HEK293T (cell line): ENCODE measurements at regions of chr4 and their contacts with region 1.

Region 1: DNA sequence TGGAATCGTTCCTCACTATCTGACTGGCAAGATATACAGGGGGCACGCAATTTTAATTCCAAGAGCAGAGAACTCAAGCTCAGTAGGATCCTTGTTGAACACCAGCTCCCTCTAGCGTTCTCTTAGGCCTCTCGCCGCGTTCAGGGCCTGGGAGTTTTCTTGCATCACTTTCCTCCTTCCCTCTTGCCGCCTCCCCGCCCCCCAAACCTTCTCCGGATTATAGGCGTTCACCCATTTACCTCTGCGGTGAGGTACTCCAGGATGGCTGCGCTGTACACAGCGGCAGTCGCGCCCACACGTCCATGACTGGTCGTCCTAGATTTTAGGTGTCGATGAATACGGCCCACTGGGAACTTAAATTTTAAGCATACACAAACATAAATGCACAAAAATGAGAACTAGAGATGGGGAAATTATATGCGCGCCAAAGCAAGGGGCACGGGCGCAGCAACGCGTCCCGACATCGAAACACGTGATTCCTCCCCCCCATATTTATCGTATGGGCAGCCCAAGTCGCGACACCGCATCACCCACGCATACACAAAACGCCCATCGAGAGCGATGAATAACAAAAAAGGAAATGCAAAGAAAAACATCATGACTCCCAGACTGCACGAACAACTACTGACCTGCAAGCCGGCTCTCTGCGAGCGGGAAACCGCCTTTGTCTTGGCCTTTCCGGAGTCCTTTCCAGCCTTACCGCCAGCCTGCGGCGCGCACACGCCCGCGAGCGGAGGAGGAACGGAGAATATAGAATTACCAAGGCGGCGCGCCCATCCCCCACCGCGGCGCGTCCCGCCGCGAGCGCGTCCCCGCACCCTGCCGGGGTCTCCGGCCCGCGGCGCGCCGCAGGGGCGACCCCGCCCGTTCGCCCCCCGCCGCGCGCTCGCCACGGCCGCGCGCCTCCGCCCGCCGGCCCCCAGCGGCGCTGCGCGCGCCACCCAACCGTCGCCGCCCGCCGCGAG is 759 bp downstream of the H2AZ1 start:
- DNase-seq: peak; percentile 50

Region 2: GRCh38 chr4:99563310-99564186 is 385.8 kb before region 1 on chr4 and contains the start of gene TRMT10A:
- CTCF ChIA-PET with region 1: no interaction called
- POLR2A ChIA-PET with region 1: interaction called, 10 read pairs
- DNase-seq: peak; percentile 87

Region 3: DNA sequence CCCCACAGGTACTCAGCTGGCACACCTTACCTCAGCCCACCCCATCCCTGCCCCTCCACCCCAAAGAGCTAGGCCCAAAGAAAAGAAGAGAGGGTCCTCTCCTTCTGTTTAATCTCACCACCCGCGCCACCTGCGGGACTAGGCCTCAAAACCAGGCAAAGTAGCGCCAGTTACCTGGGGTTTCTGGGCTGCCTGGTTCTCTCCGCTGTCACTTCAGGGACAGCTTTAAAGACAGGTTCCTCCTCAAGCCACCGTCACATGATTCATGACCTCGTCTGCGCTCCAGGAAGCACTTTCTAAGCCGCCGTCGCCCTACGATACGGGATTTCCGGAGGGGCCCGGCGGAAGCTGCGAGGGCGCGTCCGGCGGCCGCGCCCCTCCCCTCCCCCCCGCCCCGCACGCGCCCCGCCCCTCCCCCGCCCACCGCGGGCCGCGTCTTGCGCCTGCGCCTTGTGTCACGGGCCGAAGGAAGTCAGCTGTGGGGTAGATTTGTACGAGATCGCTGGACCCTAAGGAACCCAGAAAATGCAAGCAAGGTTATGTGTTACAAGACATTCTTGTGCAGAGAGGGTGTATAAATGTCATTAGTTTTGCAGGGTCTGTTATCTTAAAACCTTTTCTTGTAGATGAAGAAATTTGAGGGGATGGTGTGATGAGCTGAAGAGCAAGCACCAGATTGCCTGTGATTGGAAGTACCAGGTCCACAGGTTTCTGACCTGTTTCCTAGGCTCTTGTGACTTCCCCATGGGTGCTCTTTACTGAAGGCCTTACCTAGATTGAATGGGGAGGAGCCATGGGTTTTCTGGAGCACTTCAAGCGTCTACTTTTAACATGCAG is 54.9 kb before region 1 on chr4 and contains the start of gene LAMTOR3:
- CTCF ChIA-PET with region 1: interaction called, 3 read pairs
- POLR2A ChIA-PET with region 1: interaction called, 10 read pairs
- DNase-seq: peak; percentile 91

Region 4: GRCh38 chr4:99915449-99915848 is 33.9 kb before region 1 on chr4:
- CTCF ChIA-PET with region 1: no interaction called
- POLR2A ChIA-PET with region 1: no interaction called
- DNase-seq: no peak

Region 5: DNA sequence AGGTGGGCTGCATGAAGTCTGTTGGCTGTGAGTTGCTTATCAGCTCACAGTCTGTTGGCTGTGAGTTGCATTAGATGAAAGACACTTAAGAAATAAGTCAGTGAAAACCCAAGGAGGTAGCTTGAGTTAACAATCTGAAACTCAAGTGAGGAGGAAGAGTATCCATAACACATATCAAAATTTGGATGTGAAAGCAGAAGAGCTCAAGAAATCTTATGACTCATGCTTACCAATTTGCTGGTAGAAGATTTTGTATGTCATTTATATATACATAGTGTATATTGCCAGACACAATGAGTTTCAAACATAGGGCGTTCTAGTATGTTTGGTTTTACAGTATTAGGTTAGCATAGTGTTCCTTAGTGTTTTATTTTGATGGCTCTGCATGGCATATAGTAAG is 133.5 kb after region 1 on chr4:
- CTCF ChIA-PET with region 1: no interaction called
- POLR2A ChIA-PET with region 1: no interaction called
- DNase-seq: no peak